Sigmoid colon (tissue), 7 donors: ENCODE measurements at regions of chr9 and their contacts with region 1.

Region 1: DNA sequence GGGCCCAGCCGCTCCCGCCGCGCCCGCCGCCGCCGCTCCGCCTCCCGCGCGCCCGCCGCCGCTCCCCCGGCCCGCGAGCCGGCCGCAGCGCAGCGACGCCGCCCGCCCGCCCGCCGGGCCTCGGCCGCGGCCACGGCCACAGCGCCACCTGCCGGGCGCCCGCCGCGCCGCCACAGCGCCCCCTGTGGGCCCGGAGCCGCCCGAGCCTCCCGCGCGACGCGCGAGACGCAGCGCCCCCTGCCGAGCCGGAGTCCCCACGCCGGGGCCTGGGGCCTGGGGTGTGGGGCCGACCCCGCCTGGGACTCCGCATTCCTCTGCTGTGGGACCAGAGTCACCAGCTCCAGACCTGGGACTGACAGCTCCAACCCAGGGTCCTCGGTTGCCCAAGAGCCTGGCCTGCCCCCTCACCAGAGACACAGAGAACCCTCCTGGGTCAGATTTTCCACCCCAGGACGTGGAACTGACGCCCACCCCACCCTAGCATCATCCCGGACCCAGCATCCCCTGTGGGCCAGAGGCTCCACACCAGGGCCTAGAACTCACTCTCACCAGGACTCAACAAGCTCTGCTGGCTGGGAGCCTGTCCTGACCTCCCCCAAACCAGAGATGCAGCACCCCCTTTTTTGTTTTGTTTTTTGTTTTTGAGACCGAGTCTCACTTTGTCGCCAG is at the start of gene RAPGEF1:
- DNase-seq: peak; percentile 84
- H3K4me3 ChIP-seq: peak within 1 kb of the TSS; percentile 44 to 71 (median 62)
- H3K27ac ChIP-seq: peak within 1 kb of the TSS; percentile 86 to 94 (median 89)
- H3K4me1 ChIP-seq: peaks cover 0 to 39% (median 35%) of the 10 kb centered on the region in 4 donors
- H3K27me3 ChIP-seq: no peaks in the 10 kb centered on the region
- CTCF ChIP-seq: peak; percentile 51 to 86 (median 60)
- EP300 ChIP-seq: no peak
- POLR2A ChIP-seq: no peak
- total RNA-seq, gene RAPGEF1: 41.7 to 58.2 (median 49.0) TPM

Region 2: GRCh38 chr9:131349881-131350563 is 390.1 kb before region 1 on chr9:
- intact Hi-C with region 1: loop called (anchors 5 kb)
- DNase-seq: peak; percentile 94
- H3K4me3 ChIP-seq: peak overlapping the region in 3 of 4 donors; percentile 20 to 33 (median 30)
- H3K27ac ChIP-seq: peak overlapping the region in 1 of 4 donors; percentile 34
- H3K4me1 ChIP-seq: peaks cover 0 to 9% (median 9%) of the 10 kb centered on the region in 4 donors
- H3K27me3 ChIP-seq: peaks cover 0 to 3% (median 0%) of the 10 kb centered on the region in 3 donors
- CTCF ChIP-seq: peak; percentile 85 to 92 (median 89)
- EP300 ChIP-seq: no peak
- POLR2A ChIP-seq: no peak

Region 3: GRCh38 chr9:131502781-131503625 is 237.1 kb before region 1 on chr9 and contains the start of gene POMT1:
- intact Hi-C with region 1: loop called (anchors 10 kb)
- DNase-seq: peak; percentile 93
- H3K4me3 ChIP-seq: peak within 1 kb of the TSS; percentile 69 to 93 (median 85)
- H3K27ac ChIP-seq: peak within 1 kb of the TSS; percentile 80 to 86 (median 84)
- H3K4me1 ChIP-seq: peaks cover 0 to 27% (median 24%) of the 10 kb centered on the region in 4 donors
- H3K27me3 ChIP-seq: no peaks in the 10 kb centered on the region
- CTCF ChIP-seq: no peak
- EP300 ChIP-seq: no peak
- POLR2A ChIP-seq: peak; percentile 26 to 42
- total RNA-seq, gene POMT1: 21.9 to 61.2 (median 30.0) TPM

Region 4: DNA sequence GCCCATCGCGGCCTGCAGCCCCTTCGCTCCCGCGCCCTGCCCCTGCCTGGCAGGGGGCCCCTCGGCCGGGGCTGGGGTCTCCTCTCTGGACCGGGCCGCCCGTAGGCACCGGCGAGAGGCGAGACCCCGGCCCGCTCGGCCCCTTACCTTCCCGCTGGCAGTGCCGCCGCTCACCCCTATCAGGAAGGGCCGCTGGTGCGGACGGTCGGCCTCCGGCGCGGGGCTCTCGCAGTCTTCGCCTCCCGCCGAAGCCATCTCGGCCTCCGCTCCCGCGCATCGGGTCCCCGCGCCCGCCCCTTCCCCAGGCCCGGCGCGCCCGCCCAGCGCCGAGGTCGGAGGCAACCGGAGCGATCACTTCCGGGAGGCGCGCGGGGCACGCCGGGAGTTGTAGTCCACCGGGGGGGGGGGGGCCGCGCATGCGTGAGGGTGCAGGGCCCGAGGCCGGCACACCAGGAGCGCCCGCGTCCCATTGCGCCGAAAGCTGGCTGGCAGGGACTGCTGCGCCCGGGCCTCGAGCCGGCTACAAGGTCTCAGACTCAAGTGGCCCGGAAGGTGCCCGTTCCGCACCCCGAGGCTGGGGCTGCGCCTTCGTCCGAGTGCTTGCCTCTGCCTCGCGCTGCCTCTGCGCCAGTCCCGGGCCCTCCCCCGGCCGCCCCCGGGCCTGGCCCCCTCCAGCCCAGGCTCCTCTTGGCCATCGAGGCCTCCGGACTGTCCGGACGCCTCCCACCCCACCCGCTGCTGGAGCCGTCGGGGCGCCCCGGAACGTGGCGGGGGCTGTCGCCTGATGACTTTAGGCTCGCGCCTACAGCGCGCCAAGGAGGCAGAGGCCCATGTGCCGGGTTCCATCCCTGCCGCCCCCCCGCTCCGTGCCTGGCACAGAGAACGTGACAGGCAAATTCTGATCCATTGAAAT is 208.9 kb before region 1 on chr9 and contains the start of gene UCK1:
- intact Hi-C with region 1: loop called (anchors 5 kb)
- DNase-seq: peak; percentile 90
- H3K4me3 ChIP-seq: peak within 1 kb of the TSS; percentile 75 to 99 (median 88)
- H3K27ac ChIP-seq: peak within 1 kb of the TSS; percentile 84 to 87 (median 86)
- H3K4me1 ChIP-seq: peaks cover 0 to 20% (median 15%) of the 10 kb centered on the region in 4 donors
- H3K27me3 ChIP-seq: no peaks in the 10 kb centered on the region
- CTCF ChIP-seq: no peak
- EP300 ChIP-seq: no peak
- POLR2A ChIP-seq: peak; percentile 55 to 58
- total RNA-seq, gene UCK1: 35.7 to 67.5 (median 52.0) TPM

Region 5: DNA sequence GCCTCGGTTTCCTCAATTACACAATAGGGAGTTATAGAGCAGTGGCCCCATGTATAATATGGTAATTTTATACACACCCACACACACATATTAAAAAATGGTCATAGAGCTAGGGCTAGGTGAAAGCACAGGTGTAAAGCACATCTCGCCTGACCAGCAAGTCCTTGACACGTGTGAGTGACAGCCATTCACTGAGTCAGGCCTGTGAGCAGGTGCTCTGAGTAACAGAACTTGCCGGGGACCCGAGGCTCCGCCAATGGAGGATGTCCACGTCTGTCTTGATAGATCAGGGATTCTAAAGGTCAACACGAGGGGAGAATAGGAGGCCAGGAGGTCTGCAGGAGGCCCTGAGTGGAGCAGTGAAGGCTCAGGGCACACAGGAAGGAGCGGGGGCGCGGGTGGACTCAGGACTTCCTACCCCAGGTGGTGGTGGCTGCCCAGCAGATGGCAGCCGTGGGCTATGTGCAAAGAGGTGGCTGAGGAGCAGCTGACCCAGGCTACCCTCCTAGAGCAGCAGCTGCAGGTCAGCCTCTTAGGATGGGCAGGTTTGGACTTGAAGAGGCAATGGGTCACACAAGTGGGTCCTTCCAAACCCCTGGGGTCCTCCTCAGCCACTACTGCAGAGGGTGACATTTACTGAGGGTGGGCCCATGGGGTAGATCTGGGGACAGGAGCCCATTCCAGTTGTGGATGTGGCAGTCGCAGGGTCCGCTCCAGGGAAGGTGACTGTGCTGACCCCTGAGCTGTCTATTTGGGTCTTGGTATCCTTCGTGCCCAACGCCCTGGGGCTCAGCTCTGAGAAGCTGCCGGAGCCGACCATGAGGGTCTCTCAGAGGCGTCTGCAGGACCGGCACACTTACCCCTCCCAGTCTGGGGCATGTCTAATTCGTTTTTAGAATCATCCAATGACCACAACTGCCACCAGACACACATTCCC is 148.9 kb before region 1 on chr9:
- intact Hi-C with region 1: loop called (anchors 1 kb)
- DNase-seq: peak; percentile 87
- H3K4me3 ChIP-seq: no peak overlapping the region
- H3K27ac ChIP-seq: no peak overlapping the region
- H3K4me1 ChIP-seq: no peaks in the 10 kb centered on the region
- H3K27me3 ChIP-seq: no peaks in the 10 kb centered on the region
- CTCF ChIP-seq: peak; percentile 71 to 86 (median 84)
- EP300 ChIP-seq: no peak
- POLR2A ChIP-seq: no peak

Region 6: DNA sequence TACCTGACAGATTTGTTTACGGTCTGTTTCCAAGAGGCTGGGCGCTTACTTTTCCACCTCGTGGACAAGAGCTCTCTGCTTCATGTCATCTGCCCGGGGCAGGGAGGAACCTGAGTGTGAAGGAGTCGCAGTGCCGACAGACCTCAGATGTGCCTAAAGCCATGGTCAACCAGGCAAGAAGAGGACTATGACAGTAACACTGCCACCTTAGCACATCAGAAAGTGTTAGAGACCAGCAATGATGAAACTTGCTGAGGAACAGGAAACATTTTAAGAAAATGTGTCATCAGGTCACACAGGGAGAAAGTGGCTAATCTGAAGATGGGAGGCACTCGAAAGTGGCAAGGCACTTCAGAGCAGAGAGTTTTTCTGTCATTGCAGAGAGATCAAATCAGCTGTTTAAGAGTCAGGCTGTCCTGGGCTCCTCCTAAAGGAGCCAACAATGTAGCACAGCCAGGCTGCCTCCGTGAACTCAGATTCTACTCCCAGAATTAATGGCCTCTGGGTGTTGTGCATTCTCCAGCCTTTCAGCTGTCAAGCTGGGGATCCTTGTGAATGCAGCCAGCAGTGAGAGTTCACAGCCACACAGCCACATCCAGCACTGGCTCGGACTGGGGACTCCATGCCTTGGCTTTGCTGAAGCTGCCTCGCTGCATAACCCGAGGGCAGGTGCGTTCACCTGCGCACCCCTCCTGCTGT is 94.9 kb before region 1 on chr9:
- intact Hi-C with region 1: loop called (anchors 2 kb)
- DNase-seq: no peak
- H3K4me3 ChIP-seq: no peak overlapping the region
- H3K27ac ChIP-seq: peak overlapping the region; percentile 8 to 66 (median 50)
- H3K4me1 ChIP-seq: peaks cover 0 to 58% (median 43%) of the 10 kb centered on the region in 4 donors
- H3K27me3 ChIP-seq: no peaks in the 10 kb centered on the region
- CTCF ChIP-seq: no peak
- EP300 ChIP-seq: no peak
- POLR2A ChIP-seq: no peak